ENCODE measurements at regions of chr16 and their contacts with region 1.

Region 1: GRCh38 chr16:55073830-55074229 is 143.2 kb downstream of the IRX5 start:
- DNase-seq: peak; percentile 30
- H3K4me3 ChIP-seq: no peak overlapping the region
- H3K27ac ChIP-seq: no peak overlapping the region
- H3K4me1 ChIP-seq: no peaks in the 10 kb centered on the region
- H3K27me3 ChIP-seq: no peaks in the 10 kb centered on the region
- CTCF ChIP-seq: no peak
- EP300 ChIP-seq: no peak
- POLR2A ChIP-seq: no peak

Region 2: GRCh38 chr16:55052741-55053415 is 21.0 kb before region 1 on chr16:
- intact Hi-C with region 1: loop called (anchors 2 kb)
- DNase-seq: peak; percentile 19
- H3K4me3 ChIP-seq: no peak overlapping the region
- H3K27ac ChIP-seq: no peak overlapping the region
- H3K4me1 ChIP-seq: peaks cover 0 to 9% (median 0%) of the 10 kb centered on the region in 4 donors
- H3K27me3 ChIP-seq: peaks cover 0 to 47% (median 15%) of the 10 kb centered on the region in 3 donors
- CTCF ChIP-seq: no peak
- EP300 ChIP-seq: no peak
- POLR2A ChIP-seq: no peak

Measured in sigmoid colon (tissue), 7 donors.